Endothelial cell of umbilical vein (primary cell): ENCODE measurements at regions of chr6 and their contacts with region 1.

Region 1: DNA sequence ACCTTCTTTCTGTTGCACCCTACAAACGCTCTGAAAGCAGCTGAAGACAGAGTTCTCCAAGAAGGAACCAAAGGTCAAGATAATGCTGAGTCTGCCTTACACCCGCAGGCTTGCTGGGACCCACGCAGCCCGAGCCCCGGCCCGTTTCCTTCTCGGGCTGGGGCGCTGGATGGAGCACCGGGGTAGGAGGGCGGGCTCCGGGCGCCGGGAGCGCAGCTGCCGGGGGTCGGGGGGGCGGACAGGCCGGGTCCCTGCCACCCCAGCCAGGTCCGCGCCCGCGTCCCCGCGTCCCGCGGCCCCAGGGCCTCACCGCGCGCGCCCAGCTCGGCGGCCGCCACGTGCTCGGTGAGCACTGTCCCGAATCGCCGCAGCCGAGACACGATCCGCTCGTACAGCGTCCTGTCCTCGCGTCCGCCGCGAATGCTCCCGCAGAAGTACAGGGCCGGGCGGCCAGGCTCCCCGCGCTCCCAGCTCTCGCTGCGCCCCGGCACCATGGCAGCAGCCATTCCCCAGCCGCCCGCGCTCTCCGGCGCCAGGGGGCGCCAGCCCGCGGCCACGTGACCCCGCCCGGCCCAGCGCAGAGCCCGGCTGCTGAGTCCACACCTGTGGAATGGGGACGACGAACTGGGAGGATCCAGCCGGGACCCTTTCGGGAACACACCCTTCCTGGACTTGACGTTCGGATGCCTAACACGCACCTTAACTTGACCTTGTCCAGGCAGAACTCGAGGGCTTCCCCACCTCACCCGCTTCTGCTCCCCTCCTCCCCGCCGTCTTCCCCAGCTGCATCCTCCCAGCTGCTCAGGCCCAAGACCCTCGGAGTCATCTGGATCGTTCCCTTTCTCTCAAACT is at the start of gene DNPH1:
- DNase-seq: peak; percentile 70
- H3K4me3 ChIP-seq: peak within 1 kb of the TSS; percentile 54 to 76 (median 71)
- H3K27ac ChIP-seq: peak within 1 kb of the TSS; percentile 30
- H3K4me1 ChIP-seq: peaks cover 6% of the 10 kb centered on the region
- H3K27me3 ChIP-seq: peaks cover 6 to 10% of the 10 kb centered on the region in 2 experiments
- CTCF ChIP-seq: peak; percentile 80 to 92
- POLR2A ChIP-seq: peak; percentile 77
- total RNA-seq, gene DNPH1: 34.3 and 37.7 TPM in 2 replicates

Region 2: DNA sequence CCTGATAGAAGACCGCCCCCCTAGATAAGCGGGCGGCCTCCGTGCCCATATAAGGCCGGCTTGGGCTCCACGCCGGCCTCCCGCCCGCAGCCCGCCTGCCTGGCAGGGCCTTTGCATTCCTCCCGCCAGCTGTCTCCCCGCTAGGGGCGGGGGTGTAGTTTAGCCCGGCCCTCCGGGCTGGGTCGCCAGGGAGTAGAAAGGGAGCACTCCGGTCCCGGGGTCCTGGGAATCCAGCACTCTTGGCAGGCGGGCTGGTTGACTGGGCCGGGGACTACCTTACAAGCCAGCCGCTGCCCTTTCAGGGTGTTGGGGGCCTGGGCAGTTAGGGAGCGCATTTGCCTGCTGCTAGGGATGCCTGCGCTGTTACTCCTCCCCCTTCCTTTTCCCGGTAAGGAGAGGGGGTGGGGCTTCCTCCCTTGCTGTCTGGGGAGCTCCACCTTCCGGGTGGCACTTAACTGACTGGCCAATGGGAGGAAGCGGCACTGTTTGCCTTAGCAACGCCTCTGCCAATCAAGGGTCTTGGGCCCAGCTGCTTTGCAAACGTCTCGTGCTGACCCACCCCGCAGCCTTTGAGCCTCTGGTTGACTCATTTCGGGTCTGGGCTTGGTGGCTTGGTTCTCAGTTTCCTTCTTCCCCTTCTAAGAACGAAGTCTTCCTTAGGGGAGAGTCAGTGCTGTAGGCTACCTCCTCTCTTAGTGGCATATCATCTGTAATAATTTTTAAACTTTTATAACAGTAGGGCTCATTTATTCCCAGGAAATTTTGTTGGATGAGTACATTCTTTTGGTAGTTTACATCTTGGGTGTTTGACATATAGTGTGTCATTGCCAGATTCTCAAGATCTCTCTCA is 54.7 kb before region 1 on chr6:
- CTCF ChIA-PET with region 1: interaction called, 17 read pairs
- POLR2A ChIA-PET with region 1: no interaction called
- dilution Hi-C with region 1: no loop called
- intact Hi-C with region 1: loop called (anchors 1 kb)
- DNase-seq: peak; percentile 99
- H3K4me3 ChIP-seq: peak overlapping the region in 2 of 3 experiments; percentile 40 to 41
- H3K27ac ChIP-seq: peak overlapping the region; percentile 76
- H3K4me1 ChIP-seq: peaks cover 25% of the 10 kb centered on the region
- H3K27me3 ChIP-seq: no peaks in the 10 kb centered on the region
- CTCF ChIP-seq: peak in 1 of 2 donors; percentile 28
- POLR2A ChIP-seq: peak; percentile 78

Region 3: DNA sequence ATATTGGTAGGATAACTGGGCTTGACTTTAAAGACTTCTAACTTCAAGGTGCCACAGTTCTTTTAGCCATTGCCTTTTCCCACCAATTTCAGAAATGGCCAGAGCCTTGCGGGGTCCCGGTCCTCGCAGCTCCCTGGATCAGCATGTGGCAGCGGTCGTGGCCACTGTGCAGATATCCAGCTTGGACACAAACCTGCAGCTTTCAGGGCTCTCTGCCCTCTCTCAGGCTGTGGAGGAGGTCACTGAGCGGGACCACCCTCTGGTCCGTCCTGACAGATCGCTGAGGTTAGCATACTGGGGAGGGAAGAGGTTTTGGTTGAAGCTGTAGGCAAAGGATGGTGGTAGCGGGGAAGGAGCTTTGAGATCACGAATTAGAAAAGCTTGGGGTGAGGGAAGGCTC is 40.7 kb before region 1 on chr6:
- CTCF ChIA-PET with region 1: interaction called, 10 read pairs
- POLR2A ChIA-PET with region 1: no interaction called
- dilution Hi-C with region 1: no loop called
- intact Hi-C with region 1: no loop called
- DNase-seq: no peak
- H3K4me3 ChIP-seq: no peak overlapping the region
- H3K27ac ChIP-seq: no peak overlapping the region
- H3K4me1 ChIP-seq: peaks cover under 1% of the 10 kb centered on the region
- H3K27me3 ChIP-seq: no peaks in the 10 kb centered on the region
- CTCF ChIP-seq: no peak
- POLR2A ChIP-seq: no peak

Region 4: DNA sequence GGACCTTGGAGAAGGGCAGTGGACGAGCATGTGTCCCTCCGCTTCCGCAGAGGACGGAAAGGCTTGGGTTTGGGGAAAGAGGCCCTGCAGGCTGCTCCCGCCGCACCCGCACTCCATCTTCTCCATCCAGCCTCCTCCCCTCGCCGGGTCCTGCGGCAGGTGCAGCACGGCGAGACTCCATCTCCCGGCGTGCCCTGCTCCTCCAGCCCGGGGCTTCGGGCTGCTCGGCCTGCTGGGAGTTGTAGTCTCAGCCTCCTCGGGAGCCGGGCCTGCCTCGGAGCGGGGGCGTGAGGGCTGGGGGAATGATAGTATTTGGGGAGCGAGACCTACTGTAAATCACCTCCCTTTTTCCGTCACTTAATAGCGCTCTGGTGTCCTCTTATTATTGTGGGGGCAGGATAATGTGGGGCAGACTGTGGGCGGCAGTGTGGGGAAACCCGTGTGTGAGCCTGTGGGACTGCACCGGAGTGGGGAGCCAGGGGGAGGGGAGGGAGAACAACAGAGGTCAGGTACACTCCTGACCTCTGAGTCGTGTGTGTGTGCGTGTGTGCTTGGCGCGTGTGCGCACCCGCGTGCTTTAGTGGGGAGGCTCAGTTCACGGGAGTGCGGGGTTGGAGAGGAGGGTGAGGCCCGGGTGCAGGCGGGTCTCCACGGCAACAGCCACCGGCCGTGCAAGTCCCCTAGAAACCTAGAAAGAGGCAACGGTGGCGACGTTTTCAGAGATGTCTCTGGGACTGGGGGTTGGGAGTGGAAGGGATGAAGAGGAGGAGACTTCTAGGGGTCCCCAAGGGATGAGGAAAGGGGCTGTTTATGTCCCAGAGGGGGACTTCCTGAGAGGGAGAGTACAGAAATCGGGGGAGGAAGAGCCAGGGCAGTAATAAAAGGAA is 18.2 kb after region 1 on chr6:
- CTCF ChIA-PET with region 1: interaction called, 26 read pairs
- POLR2A ChIA-PET with region 1: no interaction called
- dilution Hi-C with region 1: no loop called
- intact Hi-C with region 1: no loop called
- DNase-seq: peak; percentile 66
- H3K4me3 ChIP-seq: peak overlapping the region; percentile 5 to 44 (median 27)
- H3K27ac ChIP-seq: no peak overlapping the region
- H3K4me1 ChIP-seq: peaks cover 4% of the 10 kb centered on the region
- H3K27me3 ChIP-seq: peaks cover 35 to 51% of the 10 kb centered on the region in 2 experiments
- CTCF ChIP-seq: no peak
- POLR2A ChIP-seq: no peak

Region 5: DNA sequence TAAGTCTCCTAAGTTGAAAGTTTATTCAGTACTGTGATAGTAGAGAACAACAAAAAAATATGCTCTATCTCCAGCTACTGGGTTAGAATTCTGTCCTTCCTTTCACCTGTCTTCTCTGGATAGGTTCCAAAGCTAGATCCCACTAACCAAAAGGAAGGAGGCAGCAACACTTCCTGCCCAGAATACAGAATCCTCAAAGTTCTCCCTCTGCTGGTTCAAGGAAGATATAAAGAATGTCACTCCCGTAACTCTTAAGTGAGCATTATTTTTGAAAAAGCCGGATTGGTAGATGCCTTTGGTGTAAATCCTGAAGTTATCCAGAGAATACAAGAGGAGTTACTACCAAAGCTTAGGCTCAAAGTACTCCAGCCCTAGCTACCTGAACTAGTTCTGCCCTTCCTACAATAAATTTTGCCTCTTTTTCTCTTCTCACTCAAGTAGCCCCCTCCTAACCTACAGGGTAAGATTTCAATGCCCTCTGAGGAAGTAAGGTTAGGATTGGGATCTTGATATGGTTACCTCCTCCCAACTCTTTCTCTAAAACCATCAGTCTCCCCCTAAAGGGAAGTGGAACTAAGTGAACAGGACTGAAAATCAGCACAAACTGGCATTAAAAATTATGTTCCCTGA is 105.4 kb after region 1 on chr6:
- CTCF ChIA-PET with region 1: interaction called, 6 read pairs
- POLR2A ChIA-PET with region 1: no interaction called
- dilution Hi-C with region 1: no loop called
- intact Hi-C with region 1: loop called (anchors 1 kb)
- DNase-seq: peak; percentile 66
- H3K4me3 ChIP-seq: no peak overlapping the region
- H3K27ac ChIP-seq: no peak overlapping the region
- H3K4me1 ChIP-seq: no peaks in the 10 kb centered on the region
- H3K27me3 ChIP-seq: no peaks in the 10 kb centered on the region
- CTCF ChIP-seq: peak; percentile 45 to 49
- POLR2A ChIP-seq: no peak

Region 6: GRCh38 chr6:43376551-43376981 is 147.4 kb after region 1 on chr6:
- CTCF ChIA-PET with region 1: no interaction called
- POLR2A ChIA-PET with region 1: no interaction called
- dilution Hi-C with region 1: no loop called
- intact Hi-C with region 1: no loop called
- DNase-seq: no peak
- H3K4me3 ChIP-seq: no peak overlapping the region
- H3K27ac ChIP-seq: no peak overlapping the region
- H3K4me1 ChIP-seq: no peaks in the 10 kb centered on the region
- H3K27me3 ChIP-seq: peaks cover 7% of the 10 kb centered on the region in 2 experiments
- CTCF ChIP-seq: no peak
- POLR2A ChIP-seq: no peak

Region 7: GRCh38 chr6:43506667-43507471 is 277.7 kb after region 1 on chr6:
- CTCF ChIA-PET with region 1: interaction called, 27 read pairs
- POLR2A ChIA-PET with region 1: no interaction called
- dilution Hi-C with region 1: no loop called
- intact Hi-C with region 1: no loop called
- DNase-seq: peak; percentile 82
- H3K4me3 ChIP-seq: no peak overlapping the region
- H3K27ac ChIP-seq: no peak overlapping the region
- H3K4me1 ChIP-seq: peaks cover 7% of the 10 kb centered on the region
- H3K27me3 ChIP-seq: no peaks in the 10 kb centered on the region
- CTCF ChIP-seq: peak; percentile 91 to 94
- POLR2A ChIP-seq: no peak